MCF 10A (cell line): ENCODE measurements at regions of chr5 and their contacts with region 1.

Region 1: GRCh38 chr5:53730943-53731342 is 170.5 kb downstream of the NDUFS4 start:
- DNase-seq: no peak
- H3K4me3 Mint-ChIP-seq: no peak overlapping the region
- H3K27ac Mint-ChIP-seq: no peak overlapping the region
- H3K4me1 Mint-ChIP-seq: no peaks in the 10 kb centered on the region
- H3K27me3 Mint-ChIP-seq: peaks cover 17% of the 10 kb centered on the region
- CTCF ChIP-seq: no peak

Region 2: DNA sequence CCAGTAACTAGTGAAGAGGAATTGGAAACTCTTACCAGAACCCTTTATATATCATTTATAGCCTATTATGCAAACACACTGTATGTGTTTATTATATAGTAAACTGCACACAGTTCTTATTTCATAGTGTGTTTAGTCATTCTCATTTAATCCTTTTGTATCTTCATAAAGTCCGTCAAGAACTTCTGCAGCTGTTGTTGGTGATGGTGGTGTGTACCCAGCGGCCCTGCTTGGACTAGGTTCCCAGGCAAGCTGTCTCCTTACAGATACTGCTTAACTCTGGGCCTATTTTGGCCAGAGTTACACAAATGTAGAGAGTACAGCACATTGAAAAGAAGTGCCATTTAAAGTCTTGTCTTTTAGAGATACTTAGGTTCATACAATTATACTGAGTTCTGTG is 61.4 kb after region 1 on chr5:
- CTCF ChIA-PET with region 1: no interaction called
- POLR2A ChIA-PET with region 1: no interaction called
- intact Hi-C with region 1: loop called (anchors 10 kb)
- DNase-seq: no peak
- H3K4me3 Mint-ChIP-seq: no peak overlapping the region
- H3K27ac Mint-ChIP-seq: no peak overlapping the region
- H3K4me1 Mint-ChIP-seq: no peaks in the 10 kb centered on the region
- H3K27me3 Mint-ChIP-seq: no peaks in the 10 kb centered on the region
- CTCF ChIP-seq: no peak

Region 3: GRCh38 chr5:53820802-53821171 is 89.8 kb after region 1 on chr5:
- CTCF ChIA-PET with region 1: no interaction called
- POLR2A ChIA-PET with region 1: no interaction called
- intact Hi-C with region 1: no loop called
- DNase-seq: peak; percentile 22
- H3K4me3 Mint-ChIP-seq: no peak overlapping the region
- H3K27ac Mint-ChIP-seq: no peak overlapping the region
- H3K4me1 Mint-ChIP-seq: no peaks in the 10 kb centered on the region
- H3K27me3 Mint-ChIP-seq: no peaks in the 10 kb centered on the region
- CTCF ChIP-seq: no peak

Region 4: GRCh38 chr5:53877243-53877642 is 146.3 kb after region 1 on chr5:
- CTCF ChIA-PET with region 1: no interaction called
- POLR2A ChIA-PET with region 1: no interaction called
- intact Hi-C with region 1: no loop called
- DNase-seq: peak; percentile 32
- H3K4me3 Mint-ChIP-seq: no peak overlapping the region
- H3K27ac Mint-ChIP-seq: no peak overlapping the region
- H3K4me1 Mint-ChIP-seq: no peaks in the 10 kb centered on the region
- H3K27me3 Mint-ChIP-seq: no peaks in the 10 kb centered on the region
- CTCF ChIP-seq: no peak